ENCODE measurements at regions of chr1 and their contacts with region 1.

Region 1: DNA sequence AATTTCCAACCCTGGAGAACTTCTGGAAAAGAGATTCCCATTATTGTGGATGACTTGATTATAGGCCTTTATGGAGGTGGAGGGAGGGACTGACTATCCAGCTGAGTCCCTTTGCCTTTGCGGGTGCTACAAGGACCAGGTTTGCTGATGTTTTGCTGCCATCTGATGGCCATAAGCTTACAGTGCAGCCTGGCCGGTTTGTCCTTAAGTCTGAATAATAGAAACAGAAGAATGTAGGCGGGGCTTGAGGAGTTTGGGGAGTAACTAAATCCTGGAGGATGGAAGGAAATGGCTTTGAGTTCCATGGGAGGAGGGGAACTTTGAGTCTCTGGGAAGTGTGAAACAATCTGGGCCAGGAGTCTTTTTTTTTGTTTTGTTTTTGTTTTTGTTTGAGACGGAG is 55.7 kb upstream of the CD1D start:
- DNase-seq: peak; percentile 25 to 70 (median 58)
- ATAC-seq: peak; percentile 94
- H3K4me3 ChIP-seq: no peak overlapping the region
- H3K4me3 Mint-ChIP-seq: no peak overlapping the region
- H3K27ac ChIP-seq: no peak overlapping the region
- H3K27ac Mint-ChIP-seq: no peak overlapping the region
- H3K4me1 ChIP-seq: no peaks in the 10 kb centered on the region
- H3K4me1 Mint-ChIP-seq: peaks cover 0 to 5% (median 3%) of the 10 kb centered on the region in 7 donors
- H3K27me3 ChIP-seq: no peaks in the 10 kb centered on the region
- H3K27me3 Mint-ChIP-seq: peaks cover 31 to 55% (median 36%) of the 10 kb centered on the region in 5 donors

Region 2: DNA sequence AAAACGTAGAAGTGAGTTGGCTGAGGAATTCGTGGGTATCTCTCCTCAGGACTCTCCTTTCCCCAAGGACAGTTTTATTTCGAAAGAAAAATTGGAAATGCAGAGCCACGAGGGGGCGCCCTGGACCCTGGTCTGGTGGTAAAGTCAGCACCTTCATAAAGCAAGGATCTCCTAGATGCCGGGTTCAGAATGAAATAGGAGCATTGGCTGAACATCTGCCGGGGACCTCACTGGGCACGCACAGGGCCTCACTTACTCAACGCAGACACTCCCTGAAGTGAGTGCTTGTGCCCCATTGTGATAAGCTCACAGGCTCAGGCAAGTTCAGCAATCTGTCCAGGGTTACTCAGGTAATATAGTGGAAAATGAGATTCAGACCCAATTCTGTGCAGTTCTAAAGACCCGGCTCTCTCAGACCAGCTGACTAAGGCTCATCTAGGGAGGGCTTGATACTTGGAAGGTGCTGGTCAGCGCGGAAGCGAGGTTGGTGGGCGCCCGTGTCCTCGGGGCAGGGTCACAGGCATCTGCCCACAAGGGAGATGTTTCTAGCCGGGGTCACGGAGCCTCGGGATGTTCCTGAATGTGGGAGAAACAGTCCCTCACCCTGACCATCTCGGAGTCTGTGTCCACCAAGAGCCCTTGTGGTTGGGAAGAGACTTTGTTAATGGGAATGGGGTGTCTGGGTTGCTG is 931.2 kb before region 1 on chr1:
- CTCF ChIA-PET with region 1: no interaction called
- POLR2A ChIA-PET with region 1: no interaction called
- intact Hi-C with region 1: loop called in 1 of 2 experiments (anchors 10 kb)
- DNase-seq: peak in 5 of 9 donors; percentile 9 to 60 (median 22)
- ATAC-seq: no peak
- H3K4me3 ChIP-seq: no peak overlapping the region
- H3K4me3 Mint-ChIP-seq: no peak overlapping the region
- H3K27ac ChIP-seq: no peak overlapping the region
- H3K27ac Mint-ChIP-seq: no peak overlapping the region
- H3K4me1 ChIP-seq: no peaks in the 10 kb centered on the region
- H3K4me1 Mint-ChIP-seq: peaks cover 0 to 12% (median 11%) of the 10 kb centered on the region in 7 donors
- H3K27me3 ChIP-seq: peaks cover 0 to 3% of the 10 kb centered on the region in 2 donors
- H3K27me3 Mint-ChIP-seq: peaks cover 35 to 52% (median 42%) of the 10 kb centered on the region in 5 donors

Region 3: DNA sequence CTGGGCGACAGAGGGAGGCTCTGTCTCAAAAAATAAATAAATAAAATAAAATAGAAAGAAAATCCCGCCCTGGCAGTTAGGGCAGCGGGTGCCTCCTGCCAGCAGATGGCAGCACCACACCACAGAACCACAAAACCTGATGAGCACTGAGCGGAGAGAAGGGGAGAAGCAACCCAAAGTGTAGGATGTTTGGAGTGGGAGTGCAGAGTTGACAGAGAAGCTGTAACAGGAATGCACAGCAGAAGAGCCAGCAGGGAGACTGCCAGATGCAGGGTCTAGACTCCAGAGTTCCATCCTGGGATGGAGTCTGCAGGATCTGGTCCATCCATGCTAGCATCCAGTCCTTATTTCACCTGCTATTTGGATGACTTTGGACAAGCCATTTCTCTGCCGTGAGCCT is 161.3 kb before region 1 on chr1:
- CTCF ChIA-PET with region 1: interaction called, 13 read pairs
- POLR2A ChIA-PET with region 1: no interaction called
- intact Hi-C with region 1: loop called (anchors 1 to 2 kb)
- DNase-seq: peak in 7 of 9 donors; percentile 30 to 55 (median 41)
- ATAC-seq: peak; percentile 51
- H3K4me3 ChIP-seq: no peak overlapping the region
- H3K4me3 Mint-ChIP-seq: peak overlapping the region in 1 of 10 donors; percentile 59
- H3K27ac ChIP-seq: no peak overlapping the region
- H3K27ac Mint-ChIP-seq: no peak overlapping the region
- H3K4me1 ChIP-seq: no peaks in the 10 kb centered on the region
- H3K4me1 Mint-ChIP-seq: no peaks in the 10 kb centered on the region
- H3K27me3 ChIP-seq: no peaks in the 10 kb centered on the region
- H3K27me3 Mint-ChIP-seq: peaks cover 2 to 55% (median 24%) of the 10 kb centered on the region in 5 donors

Region 4: DNA sequence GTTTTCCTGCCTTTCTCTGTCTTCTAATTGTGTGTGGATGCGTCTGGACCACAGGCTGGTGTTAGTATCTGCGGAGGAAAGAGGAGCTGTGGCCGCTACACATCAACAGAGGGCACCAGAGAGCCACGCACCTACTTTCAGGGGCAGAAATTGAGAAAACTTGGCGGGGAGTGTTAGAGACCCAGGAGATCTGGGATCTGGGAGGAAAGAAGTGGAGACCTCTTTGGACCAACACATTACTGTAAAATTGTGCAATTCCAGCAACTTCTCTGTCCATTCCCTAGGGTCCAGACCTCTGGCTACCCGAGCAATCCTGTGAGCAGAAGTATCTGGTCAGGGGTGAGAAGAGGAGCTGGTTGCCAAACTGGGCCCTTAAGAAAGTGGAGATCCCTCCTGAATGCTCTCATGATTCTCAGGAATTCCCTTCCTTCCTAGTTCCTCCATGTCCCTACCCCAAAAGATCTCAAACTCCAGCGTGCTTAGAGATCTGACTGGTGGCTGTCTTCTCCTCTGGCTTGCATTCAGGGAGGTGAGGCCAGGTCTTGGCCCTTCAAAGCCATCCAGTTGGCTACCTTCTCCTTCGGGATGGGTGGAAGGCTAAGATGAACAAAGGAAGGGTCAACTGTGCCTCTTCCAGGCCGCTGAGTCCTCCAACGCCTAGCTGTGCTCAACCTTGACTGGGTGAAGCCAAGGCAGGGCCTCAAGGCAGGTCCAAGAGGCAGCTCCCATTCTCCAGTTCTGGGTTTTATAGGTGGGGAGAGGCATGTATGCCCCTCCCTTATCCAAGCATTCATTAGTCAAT is 132.8 kb before region 1 on chr1:
- CTCF ChIA-PET with region 1: interaction called, 13 read pairs
- POLR2A ChIA-PET with region 1: no interaction called
- intact Hi-C with region 1: loop called (anchors 1 kb)
- DNase-seq: peak in 5 of 9 donors; percentile 11 to 32 (median 29)
- ATAC-seq: peak; percentile 64
- H3K4me3 ChIP-seq: no peak overlapping the region
- H3K4me3 Mint-ChIP-seq: peak overlapping the region in 9 of 10 donors; percentile 21 to 84 (median 65)
- H3K27ac ChIP-seq: no peak overlapping the region
- H3K27ac Mint-ChIP-seq: no peak overlapping the region
- H3K4me1 ChIP-seq: no peaks in the 10 kb centered on the region
- H3K4me1 Mint-ChIP-seq: peaks cover 0 to 19% (median 11%) of the 10 kb centered on the region in 7 donors
- H3K27me3 ChIP-seq: no peaks in the 10 kb centered on the region
- H3K27me3 Mint-ChIP-seq: peaks cover 43 to 64% (median 52%) of the 10 kb centered on the region in 5 donors

Region 5: DNA sequence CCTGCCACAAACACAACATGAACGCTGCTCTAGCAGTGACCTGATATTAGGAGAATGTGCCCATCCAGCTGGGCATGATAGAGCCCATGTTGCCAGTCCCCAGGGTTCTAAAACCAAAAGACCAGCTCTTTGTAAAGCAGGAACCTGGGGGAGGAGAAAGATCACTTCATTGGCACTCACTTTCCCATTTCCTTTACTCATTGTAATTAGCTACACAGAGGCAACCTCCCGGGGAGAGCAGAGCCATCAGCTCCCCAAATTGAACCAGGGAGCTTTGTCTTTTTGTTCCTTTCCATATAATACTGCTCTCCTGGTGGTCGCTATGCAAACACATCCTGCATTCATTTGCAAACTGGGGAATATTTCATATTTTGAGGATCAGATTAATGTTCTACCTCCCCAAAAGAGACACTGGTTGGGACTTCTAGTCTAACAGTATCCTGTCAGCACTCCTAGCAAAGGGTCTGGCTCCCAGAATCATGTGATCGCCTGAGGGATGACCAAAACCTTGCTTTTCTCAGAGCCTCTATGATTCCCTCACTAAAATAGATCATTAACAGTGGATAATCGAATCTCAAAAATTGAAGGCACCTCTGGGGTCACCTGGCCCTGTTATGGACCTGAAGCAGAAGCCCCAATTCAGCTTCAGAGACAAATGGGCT is 21.0 kb before region 1 on chr1:
- CTCF ChIA-PET with region 1: no interaction called
- POLR2A ChIA-PET with region 1: no interaction called
- intact Hi-C with region 1: no loop called
- DNase-seq: no peak
- ATAC-seq: no peak
- H3K4me3 ChIP-seq: no peak overlapping the region
- H3K4me3 Mint-ChIP-seq: no peak overlapping the region
- H3K27ac ChIP-seq: no peak overlapping the region
- H3K27ac Mint-ChIP-seq: no peak overlapping the region
- H3K4me1 ChIP-seq: no peaks in the 10 kb centered on the region
- H3K4me1 Mint-ChIP-seq: peaks cover 0 to 6% (median 0%) of the 10 kb centered on the region in 7 donors
- H3K27me3 ChIP-seq: no peaks in the 10 kb centered on the region
- H3K27me3 Mint-ChIP-seq: peaks cover 0 to 15% (median 10%) of the 10 kb centered on the region in 5 donors

Region 6: DNA sequence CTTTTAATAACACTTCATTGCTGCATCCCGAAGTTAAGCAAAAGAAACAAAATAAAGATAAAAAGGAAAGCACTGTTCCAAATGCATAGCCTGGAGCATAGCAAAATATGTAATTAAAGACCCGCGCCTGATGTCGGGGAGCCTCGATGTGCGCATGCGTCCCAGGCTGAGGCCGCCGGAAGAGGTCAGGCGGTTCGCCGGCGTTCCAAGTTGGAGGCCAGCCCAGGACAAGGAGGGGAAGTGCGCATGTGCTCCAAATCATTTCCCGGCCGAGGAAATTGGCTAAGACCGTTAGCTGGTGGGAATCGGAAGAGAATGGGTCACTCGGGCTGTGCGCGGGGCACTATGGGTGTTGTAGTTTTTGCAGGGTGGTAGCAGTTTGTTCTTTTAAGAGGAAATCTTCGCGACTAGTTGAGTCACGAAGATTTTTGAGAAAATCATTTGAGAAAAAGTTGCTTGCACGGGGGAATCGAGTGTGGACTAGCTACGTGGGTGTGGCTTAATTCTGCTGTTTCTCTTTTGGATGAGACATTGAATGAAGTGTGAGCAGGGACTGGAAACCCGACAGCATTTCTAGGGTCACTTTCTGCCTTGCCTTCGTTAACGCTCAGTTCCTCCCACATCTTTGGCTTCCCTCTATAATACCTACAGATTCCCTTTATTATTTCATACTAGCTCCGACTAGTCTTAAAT is 24.7 kb after region 1 on chr1:
- CTCF ChIA-PET with region 1: interaction called, 3 read pairs
- POLR2A ChIA-PET with region 1: no interaction called
- intact Hi-C with region 1: loop called in 1 of 2 experiments (anchors 1 kb)
- DNase-seq: peak; percentile 41 to 73 (median 65)
- ATAC-seq: peak; percentile 80
- H3K4me3 ChIP-seq: peak overlapping the region; percentile 72
- H3K4me3 Mint-ChIP-seq: peak overlapping the region; percentile 86 to 99 (median 96)
- H3K27ac ChIP-seq: peak overlapping the region; percentile 68
- H3K27ac Mint-ChIP-seq: peak overlapping the region; percentile 83 to 97 (median 90)
- H3K4me1 ChIP-seq: peaks cover 9 to 12% of the 10 kb centered on the region in 2 donors
- H3K4me1 Mint-ChIP-seq: peaks cover 23 to 37% (median 31%) of the 10 kb centered on the region in 7 donors
- H3K27me3 ChIP-seq: no peaks in the 10 kb centered on the region
- H3K27me3 Mint-ChIP-seq: peaks cover 0 to 5% (median 2%) of the 10 kb centered on the region in 5 donors

Region 7: DNA sequence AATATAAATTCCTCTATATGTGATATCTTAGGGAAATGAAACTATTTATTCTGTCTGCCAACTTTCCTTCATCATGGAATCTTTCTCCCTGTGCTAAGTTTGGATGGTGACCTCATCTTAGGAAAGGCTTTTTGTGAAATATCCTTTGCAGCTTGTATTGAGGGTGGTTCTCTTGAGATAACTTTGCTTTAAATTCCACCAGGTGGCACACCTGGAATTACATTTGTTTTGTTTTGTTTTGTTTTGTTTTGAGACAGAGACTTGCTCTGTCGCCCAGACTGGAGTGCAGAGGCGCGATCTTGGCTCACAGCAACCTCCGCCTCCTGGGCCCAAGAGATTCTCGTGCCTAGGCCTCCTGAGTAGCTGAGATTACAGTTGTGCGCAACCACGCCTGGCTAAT is 121.7 kb after region 1 on chr1:
- CTCF ChIA-PET with region 1: no interaction called
- POLR2A ChIA-PET with region 1: no interaction called
- intact Hi-C with region 1: no loop called
- DNase-seq: peak in 3 of 9 donors; percentile 7 to 20 (median 8)
- ATAC-seq: no peak
- H3K4me3 ChIP-seq: no peak overlapping the region
- H3K4me3 Mint-ChIP-seq: no peak overlapping the region
- H3K27ac ChIP-seq: no peak overlapping the region
- H3K27ac Mint-ChIP-seq: no peak overlapping the region
- H3K4me1 ChIP-seq: peaks cover 18 to 20% of the 10 kb centered on the region in 2 donors
- H3K4me1 Mint-ChIP-seq: peaks cover 18 to 31% (median 24%) of the 10 kb centered on the region in 7 donors
- H3K27me3 ChIP-seq: no peaks in the 10 kb centered on the region
- H3K27me3 Mint-ChIP-seq: peaks cover 46 to 77% (median 64%) of the 10 kb centered on the region in 5 donors